Activated CD4-positive, alpha-beta memory T cell treated with anti-CD3 and anti-CD28 coated beads, Interleukin-2, amount 10 ng/mL, durations not matched to agents 7 days and 5 days (primary cell): ENCODE measurements at regions of chr9 and their contacts with region 1.

Region 1: GRCh38 chr9:72038890-72039410 is 21.5 kb downstream of the C9orf57 start:
- DNase-seq: peak; percentile 69
- H3K4me3 Mint-ChIP-seq: no peak overlapping the region
- H3K27ac Mint-ChIP-seq: no peak overlapping the region
- H3K4me1 Mint-ChIP-seq: peaks cover 4% of the 10 kb centered on the region
- H3K27me3 Mint-ChIP-seq: peaks cover 32% of the 10 kb centered on the region

Region 2: GRCh38 chr9:71975833-71976232 is 63.1 kb before region 1 on chr9:
- CTCF ChIA-PET with region 1: no interaction called
- POLR2A ChIA-PET with region 1: no interaction called
- DNase-seq: no peak
- H3K4me3 Mint-ChIP-seq: no peak overlapping the region
- H3K27ac Mint-ChIP-seq: no peak overlapping the region
- H3K4me1 Mint-ChIP-seq: no peaks in the 10 kb centered on the region
- H3K27me3 Mint-ChIP-seq: no peaks in the 10 kb centered on the region

Region 3: GRCh38 chr9:72271613-72272478 is 232.9 kb after region 1 on chr9:
- CTCF ChIA-PET with region 1: interaction called, 74 read pairs
- POLR2A ChIA-PET with region 1: no interaction called
- DNase-seq: peak; percentile 36
- H3K4me3 Mint-ChIP-seq: no peak overlapping the region
- H3K27ac Mint-ChIP-seq: no peak overlapping the region
- H3K4me1 Mint-ChIP-seq: no peaks in the 10 kb centered on the region
- H3K27me3 Mint-ChIP-seq: peaks cover 10% of the 10 kb centered on the region

Region 4: GRCh38 chr9:72827950-72828731 is 789.2 kb after region 1 on chr9:
- CTCF ChIA-PET with region 1: interaction called, 10 read pairs
- POLR2A ChIA-PET with region 1: no interaction called
- DNase-seq: no peak
- H3K4me3 Mint-ChIP-seq: no peak overlapping the region
- H3K27ac Mint-ChIP-seq: no peak overlapping the region
- H3K4me1 Mint-ChIP-seq: no peaks in the 10 kb centered on the region
- H3K27me3 Mint-ChIP-seq: peaks cover 4% of the 10 kb centered on the region